ENCODE measurements at regions of chr9 and their contacts with region 1.

Region 1: GRCh38 chr9:128688512-128689292 is at the start of gene SET:
- DNase-seq: peak; percentile 99 to 100 (median 99)
- ATAC-seq: peak; percentile 95
- H3K4me3 ChIP-seq: peak within 1 kb of the TSS; percentile 71
- H3K27ac ChIP-seq: peak within 1 kb of the TSS; percentile 89
- H3K4me1 ChIP-seq: peaks cover 27 to 36% of the 10 kb centered on the region in 2 experiments
- H3K27me3 ChIP-seq: no peaks in the 10 kb centered on the region
- CTCF ChIP-seq: no peak; a peak in 1 of 6 replicates
- EP300 ChIP-seq: 0 out of 2 replicates have a peak, but pooled peaks have one; percentile 42
- POLR2A ChIP-seq: peak; percentile 79
- RAD21 ChIP-seq: peak; percentile 16 to 24; a peak in 2 of 4 replicates
- polyA plus RNA-seq, gene SET: 404 to 534 TPM

Region 2: GRCh38 chr9:128175102-128175563 is 513.6 kb before region 1 on chr9:
- CTCF ChIA-PET with region 1: no interaction called
- POLR2A ChIA-PET with region 1: no interaction called
- in situ Hi-C with region 1: loop called (anchors 10 kb)
- intact Hi-C with region 1: no loop called
- DNase-seq: no peak
- ATAC-seq: no peak
- H3K4me3 ChIP-seq: no peak overlapping the region
- H3K27ac ChIP-seq: peak overlapping the region; percentile 5; the same call in 1 of the 3 replicates
- H3K4me1 ChIP-seq: peaks cover 0 to 24% of the 10 kb centered on the region in 2 experiments; a peak in 3 of 5 replicates
- H3K27me3 ChIP-seq: no peaks in the 10 kb centered on the region
- CTCF ChIP-seq: no peak
- EP300 ChIP-seq: no peak
- POLR2A ChIP-seq: no peak
- RAD21 ChIP-seq: no peak

Region 3: GRCh38 chr9:128249908-128250838 is 438.5 kb before region 1 on chr9:
- CTCF ChIA-PET with region 1: no interaction called
- POLR2A ChIA-PET with region 1: no interaction called
- in situ Hi-C with region 1: loop called (anchors 10 kb)
- intact Hi-C with region 1: no loop called
- DNase-seq: peak; percentile 100
- ATAC-seq: peak; percentile 88
- H3K4me3 ChIP-seq: peak overlapping the region; percentile 72
- H3K27ac ChIP-seq: peak overlapping the region; percentile 61
- H3K4me1 ChIP-seq: peaks cover 61 to 73% of the 10 kb centered on the region in 2 experiments
- H3K27me3 ChIP-seq: no peaks in the 10 kb centered on the region
- CTCF ChIP-seq: no peak; a peak in 1 of 6 replicates
- EP300 ChIP-seq: no peak
- POLR2A ChIP-seq: peak; percentile 17; the same call in 1 of the 2 replicates
- RAD21 ChIP-seq: peak in 1 of 2 experiments; percentile 15; a peak in 1 of 4 replicates

Region 4: DNA sequence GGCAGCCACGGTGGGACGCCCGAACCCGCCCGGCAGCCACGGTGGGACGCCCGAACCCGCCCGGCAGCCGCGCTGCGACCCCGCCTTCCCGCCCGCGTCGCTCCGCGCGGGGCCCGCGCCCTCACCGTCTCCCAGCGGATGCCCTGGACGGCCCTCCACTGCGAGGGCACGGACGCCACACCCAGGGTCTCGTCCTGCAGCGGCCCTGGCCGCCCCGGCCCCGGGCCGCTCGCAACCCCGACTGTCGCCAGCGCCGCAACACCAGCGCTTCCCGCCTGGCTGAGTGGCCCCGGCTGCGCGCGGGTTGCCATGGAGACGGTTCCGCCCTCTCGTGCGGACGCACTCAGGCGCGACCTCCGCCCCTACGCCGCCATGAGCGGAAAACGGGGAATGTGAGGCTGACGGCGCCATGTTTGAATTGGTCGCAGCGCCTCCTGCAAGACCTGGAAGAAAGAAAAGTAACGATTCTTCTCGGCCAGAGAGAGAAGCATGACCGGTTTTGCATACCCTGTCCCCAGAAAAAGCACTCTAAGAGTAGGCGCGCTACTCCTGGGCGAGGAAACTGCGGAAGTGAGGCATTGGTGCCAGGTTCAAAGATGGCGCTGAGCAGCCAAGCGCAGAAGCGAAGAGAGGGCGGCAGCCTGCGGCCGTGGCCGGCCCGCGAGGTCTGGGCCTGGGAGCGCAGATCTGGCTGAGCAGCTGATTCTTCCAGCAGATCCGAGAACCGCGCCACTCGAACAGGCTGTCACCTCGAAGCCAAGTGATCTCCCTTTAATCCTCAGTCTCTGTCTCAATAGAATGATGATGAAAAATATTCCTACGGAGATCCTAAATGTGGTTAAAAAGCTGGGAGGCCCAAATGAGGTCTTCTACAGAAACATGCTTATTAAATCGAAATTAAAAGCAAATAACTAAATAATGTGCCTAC is 32.0 kb before region 1 on chr9 and contains the start of gene DYNC2I2:
- CTCF ChIA-PET with region 1: interaction called, 3 read pairs
- POLR2A ChIA-PET with region 1: interaction called, 5 read pairs
- in situ Hi-C with region 1: no loop called
- intact Hi-C with region 1: loop called (anchors 1 kb)
- DNase-seq: peak; percentile 99 to 100 (median 100)
- ATAC-seq: peak; percentile 95
- H3K4me3 ChIP-seq: peak within 1 kb of the TSS; percentile 68
- H3K27ac ChIP-seq: peak within 1 kb of the TSS; percentile 99
- H3K4me1 ChIP-seq: peaks cover 5 to 28% of the 10 kb centered on the region in 2 experiments; a peak in 4 of 5 replicates
- H3K27me3 ChIP-seq: no peaks in the 10 kb centered on the region; a peak in 1 of 5 replicates
- CTCF ChIP-seq: no peak; a peak in 1 of 6 replicates
- EP300 ChIP-seq: no peak
- POLR2A ChIP-seq: peak; percentile 88
- RAD21 ChIP-seq: peak in 1 of 2 experiments; percentile 36; a peak in 3 of 4 replicates
- polyA plus RNA-seq, gene DYNC2I2: 1.5 to 2.3 TPM

Region 5: DNA sequence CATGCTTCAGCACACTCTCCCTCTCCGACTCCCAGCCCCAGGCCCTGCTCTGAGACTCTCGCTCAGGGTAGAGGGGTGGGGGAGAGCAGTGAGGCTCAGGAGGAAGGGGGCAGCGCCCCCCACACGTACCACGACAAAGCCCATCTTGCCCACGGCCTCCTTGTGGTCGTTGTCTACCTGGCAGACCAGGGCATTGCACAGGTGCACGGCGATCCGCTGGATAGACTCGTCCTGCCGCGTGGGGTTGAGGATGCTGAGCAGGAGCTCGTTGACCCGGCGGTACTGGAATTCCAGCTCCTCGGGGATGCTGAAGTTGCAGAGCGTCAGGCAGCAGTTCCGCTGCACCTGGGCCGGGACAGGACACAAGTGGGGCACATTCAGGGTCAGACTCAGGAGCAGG is 53.7 kb after region 1 on chr9:
- CTCF ChIA-PET with region 1: no interaction called
- POLR2A ChIA-PET with region 1: no interaction called
- in situ Hi-C with region 1: no loop called
- intact Hi-C with region 1: no loop called
- DNase-seq: no peak
- ATAC-seq: no peak; the same call in 2 of the 3 replicates
- H3K4me3 ChIP-seq: no peak overlapping the region
- H3K27ac ChIP-seq: no peak overlapping the region
- H3K4me1 ChIP-seq: peaks cover 0 to 12% of the 10 kb centered on the region in 2 experiments; a peak in 2 of 5 replicates
- H3K27me3 ChIP-seq: no peaks in the 10 kb centered on the region
- CTCF ChIP-seq: no peak
- EP300 ChIP-seq: no peak
- POLR2A ChIP-seq: no peak
- RAD21 ChIP-seq: no peak

Region 6: GRCh38 chr9:129676975-129677841 is 988.5 kb after region 1 on chr9:
- CTCF ChIA-PET with region 1: no interaction called
- POLR2A ChIA-PET with region 1: interaction called, 3 read pairs
- in situ Hi-C with region 1: no loop called
- intact Hi-C with region 1: loop called (anchors 10 kb)
- DNase-seq: peak in 1 of 4 experiments; percentile 41
- ATAC-seq: peak; percentile 6; the same call in 1 of the 3 replicates
- H3K4me3 ChIP-seq: no peak overlapping the region
- H3K27ac ChIP-seq: no peak overlapping the region
- H3K4me1 ChIP-seq: peaks cover 0 to 38% of the 10 kb centered on the region in 2 experiments; a peak in 3 of 5 replicates
- H3K27me3 ChIP-seq: peaks cover 44 to 86% of the 10 kb centered on the region in 2 experiments
- CTCF ChIP-seq: peak in 2 of 3 experiments; percentile 14 to 18; a peak in 1 of 6 replicates
- EP300 ChIP-seq: no peak
- POLR2A ChIP-seq: no peak; the same call in 1 of the 2 replicates
- RAD21 ChIP-seq: no peak

Measured in K562 (cell line).